Astrocyte of the cerebellum (primary cell): ENCODE measurements at regions of chr1 and their contacts with region 1.

Region 1: GRCh38 chr1:165248969-165249571 is 107.4 kb downstream of the LMX1A start:
- DNase-seq: no peak
- H3K4me3 ChIP-seq: no peak overlapping the region
- CTCF ChIP-seq: no peak

Region 2: DNA sequence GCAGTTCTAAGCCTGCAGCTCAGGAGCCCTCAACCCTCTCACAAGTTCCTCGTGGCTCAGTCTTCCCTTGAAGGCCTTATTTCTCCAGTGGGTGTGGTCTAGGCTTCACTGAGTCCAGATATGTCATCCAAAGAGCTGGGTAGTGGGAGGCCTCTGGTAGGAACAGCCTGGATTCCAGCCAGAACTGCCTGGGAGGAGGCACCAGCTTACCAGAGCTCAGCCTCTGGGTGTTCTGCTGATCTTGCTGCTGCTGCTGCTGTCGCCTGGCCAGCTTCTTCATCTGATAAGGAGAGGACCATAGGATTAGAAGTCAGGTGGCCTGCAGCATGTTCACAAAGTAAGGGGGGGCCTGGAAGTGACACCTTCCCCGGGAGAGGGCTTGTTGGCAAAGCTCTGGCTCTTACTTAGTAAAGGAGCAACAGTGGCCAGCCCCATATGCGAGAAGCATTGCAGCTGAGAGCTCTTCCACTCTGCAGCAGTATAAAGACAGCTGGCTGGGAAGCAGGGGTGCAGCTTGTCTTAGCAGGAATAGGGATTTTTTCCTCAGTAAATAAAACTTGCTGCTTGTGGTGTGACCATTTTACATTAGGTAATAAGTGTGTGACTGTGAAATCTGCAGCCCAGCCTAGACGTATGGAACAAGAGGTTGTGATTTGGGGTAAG is 41.1 kb before region 1 on chr1:
- in situ Hi-C with region 1: loop called (anchors 5 kb)
- DNase-seq: no peak
- H3K4me3 ChIP-seq: no peak overlapping the region
- CTCF ChIP-seq: no peak

Region 3: DNA sequence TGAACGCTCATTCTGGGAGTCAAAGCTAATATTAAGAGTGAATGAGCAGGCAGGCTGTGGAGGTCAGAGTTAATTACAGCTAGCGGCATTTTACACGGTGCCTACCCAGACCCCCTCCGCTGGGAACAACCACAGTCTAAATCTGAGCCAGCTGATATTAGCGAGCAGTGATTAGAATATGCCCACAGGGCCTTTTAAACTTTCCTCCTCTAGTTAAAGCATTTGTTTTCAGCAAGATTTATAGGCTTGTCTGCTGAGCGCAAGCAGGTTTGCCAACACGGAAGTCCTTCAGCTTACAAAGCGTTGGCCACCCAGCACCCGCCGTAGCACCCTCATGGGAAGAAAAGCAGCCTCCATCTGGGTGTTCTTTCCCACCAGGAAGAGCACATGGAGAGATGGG is 35.4 kb after region 1 on chr1:
- in situ Hi-C with region 1: loop called (anchors 5 kb)
- DNase-seq: no peak
- H3K4me3 ChIP-seq: no peak overlapping the region
- CTCF ChIP-seq: no peak

Region 4: GRCh38 chr1:165666152-165666825 is 417.2 kb after region 1 on chr1:
- in situ Hi-C with region 1: no loop called
- DNase-seq: no peak
- H3K4me3 ChIP-seq: no peak overlapping the region
- CTCF ChIP-seq: no peak